Motor neuron (in vitro differentiated cells): ENCODE measurements at regions of chr10 and their contacts with region 1.

Region 1: DNA sequence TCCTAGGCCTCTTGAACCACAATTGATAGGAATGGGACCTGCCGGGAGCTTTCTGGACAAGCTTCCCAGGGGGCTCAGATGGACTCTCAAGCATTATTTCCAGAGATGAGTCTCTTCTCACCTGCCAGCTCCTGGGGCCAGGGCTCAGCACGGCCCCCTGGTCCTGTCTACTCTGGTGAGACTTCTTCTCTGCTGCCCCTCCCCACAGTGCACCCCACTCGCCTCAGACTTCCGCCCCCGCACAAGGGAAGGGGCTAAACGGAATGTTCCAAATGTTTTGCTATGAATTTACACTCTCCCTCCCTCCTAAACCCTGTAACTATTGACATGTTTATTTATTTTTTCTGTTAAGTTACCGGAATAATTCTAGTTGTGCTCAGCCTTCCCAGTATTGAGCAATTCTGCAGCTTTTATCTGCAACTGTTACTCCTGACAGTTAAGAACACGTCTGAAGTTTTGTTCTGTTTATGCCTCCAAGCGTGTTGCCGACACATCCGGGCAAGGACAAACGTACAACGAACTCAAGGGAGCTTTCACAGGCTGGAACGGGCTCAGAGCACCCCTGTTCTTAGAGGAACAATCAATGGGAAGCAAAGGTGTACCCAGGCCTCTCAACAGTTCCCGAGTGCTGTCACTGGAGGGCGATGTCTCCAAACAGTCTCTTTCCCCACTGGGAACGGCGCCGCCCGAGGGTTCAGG is 55.2 kb downstream of the FHIP2A start:
- ATAC-seq: peak; percentile 61 to 91 (median 78)
- H3K4me3 ChIP-seq: no peak overlapping the region
- H3K27ac ChIP-seq: no peak overlapping the region
- H3K4me1 ChIP-seq: peaks cover 0 to 19% of the 10 kb centered on the region in 2 donors

Region 2: GRCh38 chr10:115118346-115118745 is 241.6 kb after region 1 on chr10:
- in situ Hi-C with region 1: loop called in 4 of 9 experiments (anchors 10 to 25 kb)
- ATAC-seq: no peak
- H3K4me3 ChIP-seq: no peak overlapping the region
- H3K27ac ChIP-seq: no peak overlapping the region
- H3K4me1 ChIP-seq: no peaks in the 10 kb centered on the region

Region 3: GRCh38 chr10:115129752-115130151 is 253.0 kb after region 1 on chr10:
- in situ Hi-C with region 1: loop called in 4 of 9 experiments (anchors 10 to 25 kb)
- ATAC-seq: peak in 3 of 8 experiments; percentile 28 to 41 (median 37)
- H3K4me3 ChIP-seq: no peak overlapping the region
- H3K27ac ChIP-seq: no peak overlapping the region
- H3K4me1 ChIP-seq: no peaks in the 10 kb centered on the region